ENCODE measurements at regions of chr2 and their contacts with region 1.

Region 1: GRCh38 chr2:190781604-190782198 is 98.9 kb upstream of the GLS start:
- DNase-seq: peak; percentile 30
- H3K4me3 Mint-ChIP-seq: no peak overlapping the region
- H3K27ac Mint-ChIP-seq: no peak overlapping the region
- H3K4me1 Mint-ChIP-seq: peaks cover 39% of the 10 kb centered on the region
- H3K27me3 Mint-ChIP-seq: no peaks in the 10 kb centered on the region

Region 2: GRCh38 chr2:190648289-190649034 is 133.2 kb before region 1 on chr2:
- intact Hi-C with region 1: loop called (anchors 5 kb)
- DNase-seq: peak; percentile 74
- H3K4me3 Mint-ChIP-seq: peak overlapping the region; percentile 73
- H3K27ac Mint-ChIP-seq: peak overlapping the region; percentile 74
- H3K4me1 Mint-ChIP-seq: peaks cover 40% of the 10 kb centered on the region
- H3K27me3 Mint-ChIP-seq: no peaks in the 10 kb centered on the region

Region 3: GRCh38 chr2:190804182-190804795 is 22.6 kb after region 1 on chr2:
- intact Hi-C with region 1: loop called (anchors 1 kb)
- DNase-seq: no peak
- H3K4me3 Mint-ChIP-seq: no peak overlapping the region
- H3K27ac Mint-ChIP-seq: no peak overlapping the region
- H3K4me1 Mint-ChIP-seq: peaks cover 25% of the 10 kb centered on the region
- H3K27me3 Mint-ChIP-seq: no peaks in the 10 kb centered on the region

Region 4: DNA sequence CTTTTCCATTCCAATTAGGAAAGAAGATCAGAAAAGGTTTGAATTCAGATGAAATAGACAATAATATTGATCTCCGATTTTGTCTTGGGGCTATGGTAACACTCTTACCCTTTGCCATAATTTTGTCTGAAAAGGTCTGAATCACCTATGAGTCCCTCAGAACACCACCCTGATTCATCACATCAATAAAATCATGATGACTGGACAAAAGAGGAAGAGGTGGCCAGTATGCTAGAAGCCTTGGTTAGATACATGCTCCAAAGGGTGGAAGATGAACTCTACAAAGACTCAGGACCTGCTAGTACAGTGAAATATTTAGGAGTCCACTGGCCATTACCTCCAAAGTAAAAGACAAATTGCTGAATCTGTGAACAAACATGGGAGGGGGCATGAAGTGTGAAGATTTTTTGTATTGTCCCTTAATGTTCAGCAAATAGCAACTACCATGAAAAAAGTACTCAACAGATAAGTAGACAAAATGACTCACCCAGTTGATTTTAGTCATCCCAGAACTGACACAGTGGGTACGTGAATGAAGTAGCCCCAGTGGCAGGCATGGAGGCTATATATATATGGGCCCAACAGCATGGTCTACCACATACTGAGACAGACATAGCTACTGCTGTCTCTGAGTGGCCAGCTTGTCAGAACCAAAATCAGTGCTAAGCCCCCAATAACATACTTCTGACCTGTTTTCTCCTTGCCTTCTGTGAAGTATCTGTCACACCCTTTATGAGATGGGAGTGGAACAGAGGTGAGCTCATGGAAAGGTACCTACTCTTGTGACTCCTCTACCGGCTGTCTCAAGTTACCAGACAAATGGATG is 62.4 kb after region 1 on chr2:
- intact Hi-C with region 1: no loop called
- DNase-seq: peak; percentile 17
- H3K4me3 Mint-ChIP-seq: no peak overlapping the region
- H3K27ac Mint-ChIP-seq: peak overlapping the region; percentile 94
- H3K4me1 Mint-ChIP-seq: peaks cover 44% of the 10 kb centered on the region
- H3K27me3 Mint-ChIP-seq: no peaks in the 10 kb centered on the region

Region 5: GRCh38 chr2:190947711-190948251 is 166.1 kb after region 1 on chr2:
- intact Hi-C with region 1: loop called (anchors 5 kb)
- DNase-seq: no peak
- H3K4me3 Mint-ChIP-seq: no peak overlapping the region
- H3K27ac Mint-ChIP-seq: peak overlapping the region; percentile 23
- H3K4me1 Mint-ChIP-seq: peaks cover 16% of the 10 kb centered on the region
- H3K27me3 Mint-ChIP-seq: no peaks in the 10 kb centered on the region

Region 6: GRCh38 chr2:191030521-191031154 is 248.9 kb after region 1 on chr2:
- intact Hi-C with region 1: loop called (anchors 1 kb)
- DNase-seq: no peak
- H3K4me3 Mint-ChIP-seq: no peak overlapping the region
- H3K27ac Mint-ChIP-seq: peak overlapping the region; percentile 36
- H3K4me1 Mint-ChIP-seq: peaks cover 41% of the 10 kb centered on the region
- H3K27me3 Mint-ChIP-seq: no peaks in the 10 kb centered on the region

Measured in activated T-helper 2 cell treated with anti-CD3 and anti-CD28 coated beads, Interferon-gamma antibody, Interleukin-2, Interleukin-4, amounts not matched to agents 10 μg/mL and 5 μg/mL and 100 μg/mL, durations not matched to agents 14 hours and 24 hours and 36 hours (primary cell).